ENCODE measurements at regions of chr7 and their contacts with region 1.

Region 1: GRCh38 chr7:52017802-52018679 is 701.4 kb upstream of the COBL start:
- DNase-seq: peak; percentile 53 to 83
- H3K4me3 ChIP-seq: no peak overlapping the region; a peak in 1 of 8 replicates
- H3K27ac ChIP-seq: no peak overlapping the region
- H3K4me1 ChIP-seq: peaks cover 0 to 3% (median 0%) of the 10 kb centered on the region in 4 experiments; a peak in 1 of 7 replicates
- H3K27me3 ChIP-seq: no peaks in the 10 kb centered on the region; a peak in 1 of 7 replicates
- CTCF ChIP-seq: peak; percentile 61 to 79 (median 63)
- EP300 ChIP-seq: peak in 1 of 2 experiments; percentile 53; a peak in 1 of 3 replicates
- POLR2A ChIP-seq: no peak
- RAD21 ChIP-seq: peak; percentile 61 to 74

Region 2: DNA sequence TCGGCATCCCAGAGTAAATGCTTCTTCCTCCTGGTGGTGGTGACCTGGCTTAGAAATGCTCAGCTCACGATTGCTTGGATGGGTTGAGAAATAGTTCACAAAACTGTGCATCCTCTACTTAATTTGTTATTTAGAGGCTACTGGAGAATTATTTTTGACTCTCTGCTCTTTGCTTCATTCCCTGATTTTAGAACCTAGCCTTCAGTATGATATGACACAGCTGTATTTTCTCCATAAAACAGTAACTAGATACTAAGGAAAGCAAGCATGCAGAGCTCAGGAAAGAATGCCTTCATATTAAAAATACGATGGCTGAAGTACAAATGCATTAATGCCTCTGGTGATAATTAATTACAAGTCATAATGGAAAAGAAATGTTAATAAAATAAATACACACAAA is 99.5 kb before region 1 on chr7:
- CTCF ChIA-PET with region 1: no interaction called
- POLR2A ChIA-PET with region 1: no interaction called
- DNase-seq: no peak
- H3K4me3 ChIP-seq: no peak overlapping the region
- H3K27ac ChIP-seq: no peak overlapping the region
- H3K4me1 ChIP-seq: no peaks in the 10 kb centered on the region
- H3K27me3 ChIP-seq: no peaks in the 10 kb centered on the region
- CTCF ChIP-seq: no peak
- EP300 ChIP-seq: no peak
- POLR2A ChIP-seq: no peak
- RAD21 ChIP-seq: no peak

Region 3: DNA sequence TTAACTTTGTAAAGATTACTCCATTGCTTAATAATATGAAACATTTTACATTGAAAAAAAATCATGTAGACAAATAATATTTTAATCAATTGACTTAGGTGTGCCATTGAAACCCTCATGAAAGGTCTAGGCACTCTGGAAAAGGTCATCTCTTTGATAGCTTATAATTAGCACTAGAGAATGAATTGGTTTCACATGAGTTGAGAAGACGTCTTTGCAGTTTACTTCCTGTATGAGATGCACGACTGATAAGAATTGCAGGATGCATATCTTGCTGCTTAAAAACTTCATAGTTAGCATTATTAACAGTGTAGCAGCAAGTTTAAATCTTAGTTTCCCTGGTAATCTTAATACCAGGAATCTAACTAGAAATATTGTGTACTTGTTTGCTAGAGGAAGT is 87.2 kb before region 1 on chr7:
- CTCF ChIA-PET with region 1: no interaction called
- POLR2A ChIA-PET with region 1: no interaction called
- DNase-seq: no peak
- H3K4me3 ChIP-seq: no peak overlapping the region
- H3K27ac ChIP-seq: no peak overlapping the region
- H3K4me1 ChIP-seq: no peaks in the 10 kb centered on the region
- H3K27me3 ChIP-seq: no peaks in the 10 kb centered on the region
- CTCF ChIP-seq: no peak
- EP300 ChIP-seq: no peak
- POLR2A ChIP-seq: no peak
- RAD21 ChIP-seq: no peak

Region 4: DNA sequence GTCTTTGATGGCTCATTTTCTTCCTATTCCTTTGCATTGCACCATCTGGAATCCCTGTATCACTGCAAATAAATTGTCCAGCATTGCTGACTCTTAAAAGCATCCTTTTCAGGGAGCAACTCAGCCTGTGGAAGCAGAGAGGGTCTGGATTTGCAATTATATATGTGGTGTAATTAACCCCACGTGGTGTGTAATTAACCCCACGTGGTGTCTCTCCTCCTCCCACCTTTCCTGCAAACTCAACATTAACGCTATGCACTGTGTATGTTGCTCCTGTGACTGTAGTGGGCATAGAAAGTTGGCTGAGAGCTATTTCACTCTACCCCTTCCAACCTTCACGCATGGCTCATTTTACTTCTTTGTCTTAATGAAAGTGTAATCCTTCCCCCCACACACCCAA is 12.4 kb before region 1 on chr7:
- CTCF ChIA-PET with region 1: interaction called, 12 read pairs
- POLR2A ChIA-PET with region 1: no interaction called
- DNase-seq: no peak
- H3K4me3 ChIP-seq: no peak overlapping the region
- H3K27ac ChIP-seq: no peak overlapping the region
- H3K4me1 ChIP-seq: peaks cover 0 to 4% (median 0%) of the 10 kb centered on the region in 4 experiments; a peak in 2 of 7 replicates
- H3K27me3 ChIP-seq: no peaks in the 10 kb centered on the region
- CTCF ChIP-seq: no peak
- EP300 ChIP-seq: no peak
- POLR2A ChIP-seq: no peak
- RAD21 ChIP-seq: no peak

Region 5: DNA sequence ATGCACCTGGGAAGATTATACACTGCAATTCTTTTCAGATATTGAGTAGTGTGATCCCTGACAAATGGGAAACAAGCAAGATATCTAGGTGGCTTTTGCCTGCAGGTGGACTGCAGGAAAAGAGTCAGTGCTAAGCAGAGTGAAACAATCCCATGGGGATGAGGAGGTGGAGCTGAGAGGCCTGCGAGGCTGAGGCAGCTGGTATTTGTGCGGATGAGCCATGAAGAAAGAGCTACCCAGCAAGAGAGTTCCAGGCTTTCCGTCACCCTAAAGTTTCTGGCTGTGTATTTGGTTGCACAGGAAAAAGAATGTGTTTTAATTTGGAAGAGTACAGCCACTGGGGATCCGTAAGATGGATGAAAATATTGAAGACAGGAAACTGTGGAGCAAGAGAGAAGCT is 12.7 kb after region 1 on chr7:
- CTCF ChIA-PET with region 1: interaction called, 14 read pairs
- POLR2A ChIA-PET with region 1: no interaction called
- DNase-seq: no peak
- H3K4me3 ChIP-seq: no peak overlapping the region
- H3K27ac ChIP-seq: no peak overlapping the region
- H3K4me1 ChIP-seq: no peaks in the 10 kb centered on the region
- H3K27me3 ChIP-seq: no peaks in the 10 kb centered on the region
- CTCF ChIP-seq: no peak
- EP300 ChIP-seq: no peak
- POLR2A ChIP-seq: no peak
- RAD21 ChIP-seq: no peak

Measured in H1 (cell line).